IMR-90 (cell line): ENCODE measurements at regions of chr13 and their contacts with region 1.

Region 1: DNA sequence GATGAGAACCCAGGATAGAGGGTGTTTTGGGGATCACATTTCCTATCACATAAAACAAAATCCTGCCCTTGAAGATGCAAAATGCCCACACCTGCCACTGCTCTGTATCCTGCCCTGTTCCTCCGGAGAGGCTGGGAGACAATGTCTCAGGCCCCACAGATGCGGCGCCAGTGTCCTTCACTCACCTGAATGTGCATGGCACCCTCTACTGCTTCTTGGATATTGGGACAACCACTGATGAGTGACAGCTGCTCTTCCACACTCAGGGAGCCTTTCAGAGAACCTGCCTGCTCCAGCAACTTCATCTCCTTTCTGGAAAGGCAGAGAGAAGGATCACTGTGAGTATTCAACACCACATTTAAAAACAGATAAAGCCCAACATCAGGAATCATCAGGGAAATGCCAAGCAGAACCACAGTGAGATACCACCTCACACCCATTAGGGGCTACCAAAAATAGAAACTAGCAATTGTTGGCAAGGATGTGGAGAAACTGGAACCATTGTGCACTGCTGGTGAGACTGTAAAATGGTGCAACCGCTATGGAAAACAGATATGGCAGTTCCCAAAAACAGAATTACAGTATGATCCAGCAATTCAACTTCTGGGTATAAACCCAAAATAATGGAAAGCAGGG is 36.4 kb downstream of the CRYL1 start:
- DNase-seq: peak; percentile 62
- ATAC-seq: peak; percentile 88
- H3K4me3 ChIP-seq: no peak overlapping the region
- H3K27ac ChIP-seq: no peak overlapping the region
- H3K4me1 ChIP-seq: peaks cover 1% of the 10 kb centered on the region; the same call in 1 of the 2 replicates
- H3K27me3 ChIP-seq: no peaks in the 10 kb centered on the region
- CTCF ChIP-seq: peak; percentile 81
- POLR2A ChIP-seq: no peak
- RAD21 ChIP-seq: peak; percentile 97

Region 2: GRCh38 chr13:20182231-20182846 is 307.0 kb before region 1 on chr13:
- CTCF ChIA-PET with region 1: interaction called, 7 read pairs
- POLR2A ChIA-PET with region 1: no interaction called
- dilution Hi-C with region 1: loop called (anchors 25 kb)
- in situ Hi-C with region 1: loop called (anchors 5 kb)
- intact Hi-C with region 1: loop called (anchors 1 kb)
- DNase-seq: peak; percentile 80
- ATAC-seq: peak; percentile 99
- H3K4me3 ChIP-seq: no peak overlapping the region
- H3K27ac ChIP-seq: no peak overlapping the region
- H3K4me1 ChIP-seq: no peaks in the 10 kb centered on the region
- H3K27me3 ChIP-seq: peaks cover 19% of the 10 kb centered on the region
- CTCF ChIP-seq: peak; percentile 79
- POLR2A ChIP-seq: no peak
- RAD21 ChIP-seq: peak; percentile 87

Region 3: DNA sequence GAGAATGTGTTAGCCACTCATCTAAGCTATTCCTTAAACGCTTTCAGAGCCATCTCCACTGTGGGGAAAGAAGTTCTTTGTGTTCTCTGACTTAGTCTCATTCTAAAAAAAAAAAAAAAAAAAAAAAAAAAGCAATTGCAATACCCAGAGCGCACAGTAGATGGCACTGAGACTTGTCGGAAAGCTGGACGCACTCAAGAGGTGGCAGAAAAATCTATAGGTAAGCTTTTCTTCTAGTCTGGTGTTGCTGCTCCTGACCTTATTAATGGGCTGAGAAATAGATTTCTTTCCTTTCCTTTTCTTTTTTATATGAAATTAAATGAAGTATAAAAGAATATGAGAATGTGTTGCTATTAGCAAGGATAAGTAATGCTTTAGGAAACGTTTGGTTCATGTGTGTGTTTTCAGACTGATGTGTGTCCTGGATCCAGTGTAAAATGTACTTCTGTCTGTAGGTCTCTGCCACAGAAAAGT is 291.9 kb before region 1 on chr13:
- CTCF ChIA-PET with region 1: interaction called, 16 read pairs
- POLR2A ChIA-PET with region 1: no interaction called
- dilution Hi-C with region 1: loop called (anchors 25 kb)
- in situ Hi-C with region 1: no loop called
- intact Hi-C with region 1: loop called (anchors 1 kb)
- DNase-seq: peak; percentile 56
- ATAC-seq: peak; percentile 73
- H3K4me3 ChIP-seq: no peak overlapping the region
- H3K27ac ChIP-seq: no peak overlapping the region
- H3K4me1 ChIP-seq: peaks cover 2% of the 10 kb centered on the region; the same call in 1 of the 2 replicates
- H3K27me3 ChIP-seq: peaks cover 65% of the 10 kb centered on the region
- CTCF ChIP-seq: peak; percentile 80
- POLR2A ChIP-seq: no peak
- RAD21 ChIP-seq: peak; percentile 76

Region 4: GRCh38 chr13:20580257-20580656 is 91.0 kb after region 1 on chr13:
- CTCF ChIA-PET with region 1: no interaction called
- POLR2A ChIA-PET with region 1: no interaction called
- dilution Hi-C with region 1: no loop called
- in situ Hi-C with region 1: no loop called
- intact Hi-C with region 1: no loop called
- DNase-seq: no peak
- ATAC-seq: no peak
- H3K4me3 ChIP-seq: no peak overlapping the region
- H3K27ac ChIP-seq: no peak overlapping the region
- H3K4me1 ChIP-seq: no peaks in the 10 kb centered on the region
- H3K27me3 ChIP-seq: no peaks in the 10 kb centered on the region
- CTCF ChIP-seq: no peak
- POLR2A ChIP-seq: no peak
- RAD21 ChIP-seq: no peak